Gastrocnemius medialis (tissue), 4 donors: ENCODE measurements at regions of chr15 and their contacts with region 1.

Region 1: DNA sequence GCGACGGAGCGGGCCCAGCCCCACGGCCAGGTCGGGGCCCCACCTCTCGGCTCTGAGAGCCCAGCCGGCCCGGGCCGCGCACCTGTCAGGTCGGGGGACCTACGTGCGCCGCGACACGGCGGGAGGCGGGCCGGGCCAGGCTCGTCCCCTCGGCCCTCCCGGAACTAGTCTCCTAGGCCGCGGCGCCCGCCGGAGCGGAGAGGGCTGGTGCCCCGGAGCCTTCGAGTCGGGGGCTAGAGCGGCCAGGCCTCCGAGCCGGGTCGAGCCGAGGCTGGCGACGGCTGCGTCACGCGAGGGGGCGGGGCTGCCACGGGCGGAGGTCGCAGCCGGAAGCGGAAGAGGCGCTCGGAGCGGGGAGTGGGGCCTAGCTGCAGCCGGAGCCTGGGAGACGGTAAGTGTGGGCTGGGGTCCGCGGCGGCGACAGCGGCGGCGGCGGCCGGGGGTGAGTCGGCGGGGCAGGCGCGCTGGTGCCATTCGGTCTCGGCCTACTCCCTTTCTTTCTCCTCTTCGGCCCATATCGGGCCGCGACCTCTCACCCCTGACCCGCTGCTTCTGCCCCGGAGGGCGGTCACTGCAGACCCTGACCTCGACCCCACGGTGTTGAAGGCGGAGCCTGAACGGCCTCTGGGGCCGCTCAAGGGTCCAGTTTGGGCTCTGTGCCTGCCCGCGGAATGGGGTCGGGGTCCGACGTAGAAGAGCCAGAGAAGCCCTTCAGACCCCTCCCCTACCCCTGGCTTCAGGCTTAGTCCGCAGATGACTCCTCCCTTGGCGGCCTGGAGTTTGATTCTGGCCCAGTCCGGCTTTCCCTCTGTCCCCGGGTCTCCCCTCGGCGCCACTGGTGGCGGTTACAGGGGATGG is at the start of gene CLK3:
- DNase-seq: peak; percentile 92 to 94
- ATAC-seq: peak; percentile 71 to 73
- H3K4me3 ChIP-seq: peak within 1 kb of the TSS; percentile 74 to 94 (median 86)
- H3K27ac ChIP-seq: peak within 1 kb of the TSS; percentile 94 to 100 (median 96)
- H3K4me1 ChIP-seq: peaks cover 34 to 39% of the 10 kb centered on the region in 2 donors
- H3K27me3 ChIP-seq: no peaks in the 10 kb centered on the region
- CTCF ChIP-seq: no peak
- POLR2A ChIP-seq: peak; percentile 86 to 89
- total RNA-seq, gene CLK3: 45.4 to 152 (median 105) TPM

Region 2: GRCh38 chr15:73683777-73684580 is 931.8 kb before region 1 on chr15 and contains the start of gene CD276:
- in situ Hi-C with region 1: no loop called
- intact Hi-C with region 1: loop called (anchors 10 kb)
- DNase-seq: peak; percentile 73 to 79
- ATAC-seq: peak; percentile 71 to 81
- H3K4me3 ChIP-seq: peak within 1 kb of the TSS; percentile 71 to 93 (median 76)
- H3K27ac ChIP-seq: peak within 1 kb of the TSS; percentile 79 to 92 (median 84)
- H3K4me1 ChIP-seq: peaks cover 22 to 35% of the 10 kb centered on the region in 2 donors
- H3K27me3 ChIP-seq: no peaks in the 10 kb centered on the region
- CTCF ChIP-seq: peak in 1 of 5 experiments; percentile 34
- POLR2A ChIP-seq: peak; percentile 56
- total RNA-seq, gene CD276: 9.6 to 21.4 (median 16.6) TPM

Region 3: GRCh38 chr15:74108111-74108510 is 507.6 kb before region 1 on chr15:
- in situ Hi-C with region 1: no loop called
- intact Hi-C with region 1: no loop called
- DNase-seq: no peak
- ATAC-seq: no peak
- H3K4me3 ChIP-seq: no peak overlapping the region
- H3K27ac ChIP-seq: no peak overlapping the region
- H3K4me1 ChIP-seq: no peaks in the 10 kb centered on the region
- H3K27me3 ChIP-seq: no peaks in the 10 kb centered on the region
- CTCF ChIP-seq: no peak
- POLR2A ChIP-seq: no peak

Region 4: GRCh38 chr15:74460871-74461846 is 154.6 kb before region 1 on chr15 and contains the start of gene UBL7:
- in situ Hi-C with region 1: loop called in 1 of 4 experiments (anchors 25 kb)
- intact Hi-C with region 1: loop called (anchors 5 kb)
- DNase-seq: peak; percentile 97 to 99
- ATAC-seq: peak; percentile 96 to 97
- H3K4me3 ChIP-seq: peak within 1 kb of the TSS; percentile 64 to 86 (median 74)
- H3K27ac ChIP-seq: peak within 1 kb of the TSS; percentile 87 to 99 (median 92)
- H3K4me1 ChIP-seq: peaks cover 22 to 24% of the 10 kb centered on the region in 2 donors
- H3K27me3 ChIP-seq: no peaks in the 10 kb centered on the region
- CTCF ChIP-seq: peak in 1 of 5 experiments; percentile 12
- POLR2A ChIP-seq: peak; percentile 91 to 96
- total RNA-seq, gene UBL7: 66.4 to 139 (median 83.2) TPM

Region 5: DNA sequence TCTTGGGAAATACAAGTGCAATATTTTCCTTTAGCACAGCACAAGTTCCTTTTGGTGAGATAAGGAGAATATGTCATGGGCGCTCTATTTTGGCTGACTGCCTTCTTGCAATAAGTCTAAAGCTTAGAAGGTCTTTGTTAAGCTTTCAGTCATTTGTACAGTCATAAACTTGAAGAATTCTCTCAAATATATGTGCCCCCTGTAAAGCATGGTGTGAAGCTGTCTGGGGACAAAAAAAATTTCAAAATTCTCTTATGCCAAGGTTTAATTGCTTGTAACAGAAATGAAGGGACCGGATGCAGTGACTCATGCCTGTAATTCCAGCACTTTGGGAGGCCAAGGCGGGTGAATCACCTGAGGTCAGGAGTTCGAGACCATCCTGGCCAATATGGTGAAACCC is 96.4 kb before region 1 on chr15:
- in situ Hi-C with region 1: no loop called
- intact Hi-C with region 1: no loop called
- DNase-seq: no peak
- ATAC-seq: no peak
- H3K4me3 ChIP-seq: no peak overlapping the region
- H3K27ac ChIP-seq: no peak overlapping the region
- H3K4me1 ChIP-seq: no peaks in the 10 kb centered on the region
- H3K27me3 ChIP-seq: no peaks in the 10 kb centered on the region
- CTCF ChIP-seq: no peak
- POLR2A ChIP-seq: no peak

Region 6: GRCh38 chr15:74540761-74541493 is 74.8 kb before region 1 on chr15 and contains the start of gene ARID3B:
- in situ Hi-C with region 1: loop called in 3 of 4 experiments (anchors 5 to 10 kb)
- intact Hi-C with region 1: loop called (anchors 1 kb)
- DNase-seq: peak; percentile 97
- ATAC-seq: peak; percentile 96 to 99
- H3K4me3 ChIP-seq: peak within 1 kb of the TSS; percentile 79 to 100 (median 91)
- H3K27ac ChIP-seq: peak within 1 kb of the TSS; percentile 81 to 90 (median 86)
- H3K4me1 ChIP-seq: peaks cover 22 to 24% of the 10 kb centered on the region in 2 donors
- H3K27me3 ChIP-seq: no peaks in the 10 kb centered on the region
- CTCF ChIP-seq: no peak
- POLR2A ChIP-seq: peak; percentile 64 to 77
- total RNA-seq, gene ARID3B: 1.8 to 6.7 (median 4.6) TPM

Region 7: DNA sequence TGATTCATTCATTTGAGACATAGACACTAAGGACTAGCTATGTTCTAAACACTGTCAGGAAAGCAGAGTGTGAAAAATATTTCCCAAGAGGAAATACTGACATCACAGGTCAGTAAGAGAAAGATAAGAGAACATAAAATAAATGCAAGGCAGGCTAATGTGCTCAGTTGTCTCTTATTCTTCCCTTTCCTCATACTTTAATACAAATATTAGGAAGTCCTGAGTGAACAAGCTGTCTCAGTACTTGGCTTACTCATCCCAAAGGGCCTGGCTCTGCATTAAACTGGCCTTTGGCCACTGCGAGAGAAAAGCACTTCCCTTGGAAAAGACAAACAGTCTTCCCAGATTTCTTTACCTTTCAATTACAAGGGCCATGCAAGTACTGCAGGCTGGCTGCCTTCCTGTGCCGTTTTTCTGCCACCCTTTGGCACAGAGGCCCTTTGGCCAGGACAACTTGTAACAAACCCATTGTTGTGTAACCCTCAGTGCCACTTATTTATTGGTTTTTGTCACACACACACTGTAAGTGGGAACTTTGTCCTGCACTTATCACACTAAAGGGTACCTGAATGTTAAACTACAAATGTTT is 48.4 kb after region 1 on chr15:
- in situ Hi-C with region 1: no loop called
- intact Hi-C with region 1: no loop called
- DNase-seq: peak; percentile 51 to 67
- ATAC-seq: peak; percentile 89 to 91
- H3K4me3 ChIP-seq: no peak overlapping the region
- H3K27ac ChIP-seq: peak overlapping the region; percentile 58 to 84 (median 68)
- H3K4me1 ChIP-seq: peaks cover 32 to 34% of the 10 kb centered on the region in 2 donors
- H3K27me3 ChIP-seq: no peaks in the 10 kb centered on the region
- CTCF ChIP-seq: no peak
- POLR2A ChIP-seq: no peak

Region 8: GRCh38 chr15:74937596-74938296 is 322.0 kb after region 1 on chr15 and contains the start of gene COX5A:
- in situ Hi-C with region 1: no loop called
- intact Hi-C with region 1: loop called (anchors 1 kb)
- DNase-seq: peak; percentile 92 to 96
- ATAC-seq: peak; percentile 94 to 95
- H3K4me3 ChIP-seq: peak within 1 kb of the TSS; percentile 74 to 93 (median 90)
- H3K27ac ChIP-seq: peak within 1 kb of the TSS; percentile 96 to 100 (median 96)
- H3K4me1 ChIP-seq: peaks cover 32 to 35% of the 10 kb centered on the region in 2 donors
- H3K27me3 ChIP-seq: no peaks in the 10 kb centered on the region
- CTCF ChIP-seq: peak in 1 of 5 experiments; percentile 17
- POLR2A ChIP-seq: peak; percentile 91 to 93
- total RNA-seq, gene COX5A: 425 to 558 (median 512) TPM